ENCODE measurements at regions of chr19 and their contacts with region 1.

Region 1: DNA sequence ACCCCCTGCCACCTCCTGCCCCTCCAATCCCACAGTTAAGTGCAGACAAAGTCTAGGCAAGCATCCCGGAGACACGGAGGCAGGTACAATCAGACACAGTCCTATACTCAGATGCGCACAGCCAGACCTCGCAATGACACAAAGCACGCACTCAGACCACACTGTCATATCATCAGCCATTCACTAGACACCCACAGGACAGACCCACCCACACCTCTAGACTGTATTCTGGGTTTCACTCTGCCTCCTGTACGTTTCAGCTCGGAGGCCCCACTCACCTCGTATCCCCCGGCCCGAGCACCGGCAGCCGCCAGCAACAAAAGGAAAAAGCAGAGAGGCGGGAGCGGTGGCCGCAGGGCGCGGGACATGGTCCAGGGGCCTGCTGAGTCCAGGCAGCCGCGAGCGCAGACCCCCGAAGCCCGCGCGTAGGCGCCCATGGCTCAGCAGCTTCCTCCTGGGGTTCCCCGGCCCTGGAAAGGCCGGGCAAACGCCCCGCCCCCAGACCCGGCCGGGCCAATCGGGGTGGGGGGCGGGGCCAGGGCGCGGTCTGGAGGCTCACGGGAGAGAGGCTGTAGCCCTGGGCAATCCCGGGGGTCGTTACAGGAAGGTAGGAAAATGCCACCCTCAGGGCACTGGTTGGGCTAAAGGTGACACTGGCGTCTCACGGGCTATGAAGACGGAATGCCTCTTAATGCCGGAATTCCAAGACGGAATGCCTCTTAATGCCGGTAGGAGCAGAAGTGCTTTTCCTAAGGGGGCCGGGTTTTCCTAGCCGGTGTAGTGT is at the starts of genes MAN2B1 and WDR83:
- DNase-seq: peak; percentile 77 to 91
- ATAC-seq: peak; percentile 78 to 87 (median 82)
- H3K4me3 ChIP-seq: peak within 1 kb of the TSS; percentile 94
- H3K4me3 Mint-ChIP-seq: peak within 1 kb of the TSS; percentile 96
- H3K27ac ChIP-seq: peak within 1 kb of the TSS; percentile 90
- H3K27ac Mint-ChIP-seq: peak within 1 kb of the TSS; percentile 98
- H3K4me1 ChIP-seq: peaks cover 59% of the 10 kb centered on the region
- H3K4me1 Mint-ChIP-seq: peaks cover 41 to 52% of the 10 kb centered on the region in 2 donors
- H3K27me3 ChIP-seq: no peaks in the 10 kb centered on the region
- H3K27me3 Mint-ChIP-seq: no peaks in the 10 kb centered on the region
- CTCF ChIP-seq: no peak
- total RNA-seq, gene MAN2B1: 107 to 118 (median 112) TPM
- total RNA-seq, gene WDR83: 17.0 to 25.8 (median 25.1) TPM

Region 2: DNA sequence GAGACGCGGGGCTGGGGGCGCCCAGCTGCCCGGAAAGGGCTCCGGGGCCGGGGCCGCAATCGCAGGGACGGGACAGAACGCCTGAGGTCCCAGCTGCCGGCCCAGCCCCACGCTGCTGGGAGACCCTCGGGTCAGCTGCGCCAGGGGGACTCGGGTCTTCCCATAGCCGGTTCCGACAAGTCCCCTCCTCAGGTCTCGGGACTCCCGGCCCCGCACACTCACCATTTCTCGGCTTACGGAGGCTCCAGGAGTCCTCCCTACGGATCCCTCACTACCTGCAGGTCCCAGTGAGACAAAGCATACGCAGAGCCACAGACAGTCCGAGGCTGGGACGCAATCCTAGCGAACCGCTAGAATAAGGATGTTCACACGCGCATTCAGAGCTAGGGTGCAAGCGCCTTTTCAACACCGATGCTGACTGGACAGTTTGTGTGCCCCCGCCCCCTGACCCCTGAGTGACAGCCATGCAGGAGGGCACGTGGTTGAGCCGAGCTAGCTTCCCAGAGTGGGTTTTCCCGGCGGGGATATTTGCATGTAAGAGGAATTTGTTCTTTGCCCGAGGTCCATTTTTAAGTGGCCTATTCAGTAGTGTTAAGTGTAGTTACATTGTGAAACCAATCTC is 69.4 kb before region 1 on chr19:
- intact Hi-C with region 1: no loop called
- DNase-seq: no peak
- ATAC-seq: no peak
- H3K4me3 ChIP-seq: no peak overlapping the region
- H3K4me3 Mint-ChIP-seq: no peak overlapping the region
- H3K27ac ChIP-seq: no peak overlapping the region
- H3K27ac Mint-ChIP-seq: no peak overlapping the region
- H3K4me1 ChIP-seq: no peaks in the 10 kb centered on the region
- H3K4me1 Mint-ChIP-seq: peaks cover 0 to 10% of the 10 kb centered on the region in 2 donors
- H3K27me3 ChIP-seq: no peaks in the 10 kb centered on the region
- H3K27me3 Mint-ChIP-seq: no peaks in the 10 kb centered on the region
- CTCF ChIP-seq: no peak

Region 3: GRCh38 chr19:12610540-12611360 is 55.7 kb before region 1 on chr19 and contains the starts of genes ZNF490 and ZNF791:
- intact Hi-C with region 1: loop called (anchors 1 kb)
- DNase-seq: peak; percentile 95 to 97
- ATAC-seq: peak; percentile 93 to 98 (median 95)
- H3K4me3 ChIP-seq: peak within 1 kb of the TSS; percentile 90
- H3K4me3 Mint-ChIP-seq: peak within 1 kb of the TSS; percentile 99
- H3K27ac ChIP-seq: peak within 1 kb of the TSS; percentile 95
- H3K27ac Mint-ChIP-seq: peak within 1 kb of the TSS; percentile 98 to 99
- H3K4me1 ChIP-seq: peaks cover 49% of the 10 kb centered on the region
- H3K4me1 Mint-ChIP-seq: peaks cover 24 to 28% of the 10 kb centered on the region in 2 donors
- H3K27me3 ChIP-seq: no peaks in the 10 kb centered on the region
- H3K27me3 Mint-ChIP-seq: no peaks in the 10 kb centered on the region
- CTCF ChIP-seq: no peak
- total RNA-seq, gene ZNF490: 12.0 to 21.4 (median 20.9) TPM
- total RNA-seq, gene ZNF791: 52.6 to 62.0 (median 56.5) TPM

Region 4: DNA sequence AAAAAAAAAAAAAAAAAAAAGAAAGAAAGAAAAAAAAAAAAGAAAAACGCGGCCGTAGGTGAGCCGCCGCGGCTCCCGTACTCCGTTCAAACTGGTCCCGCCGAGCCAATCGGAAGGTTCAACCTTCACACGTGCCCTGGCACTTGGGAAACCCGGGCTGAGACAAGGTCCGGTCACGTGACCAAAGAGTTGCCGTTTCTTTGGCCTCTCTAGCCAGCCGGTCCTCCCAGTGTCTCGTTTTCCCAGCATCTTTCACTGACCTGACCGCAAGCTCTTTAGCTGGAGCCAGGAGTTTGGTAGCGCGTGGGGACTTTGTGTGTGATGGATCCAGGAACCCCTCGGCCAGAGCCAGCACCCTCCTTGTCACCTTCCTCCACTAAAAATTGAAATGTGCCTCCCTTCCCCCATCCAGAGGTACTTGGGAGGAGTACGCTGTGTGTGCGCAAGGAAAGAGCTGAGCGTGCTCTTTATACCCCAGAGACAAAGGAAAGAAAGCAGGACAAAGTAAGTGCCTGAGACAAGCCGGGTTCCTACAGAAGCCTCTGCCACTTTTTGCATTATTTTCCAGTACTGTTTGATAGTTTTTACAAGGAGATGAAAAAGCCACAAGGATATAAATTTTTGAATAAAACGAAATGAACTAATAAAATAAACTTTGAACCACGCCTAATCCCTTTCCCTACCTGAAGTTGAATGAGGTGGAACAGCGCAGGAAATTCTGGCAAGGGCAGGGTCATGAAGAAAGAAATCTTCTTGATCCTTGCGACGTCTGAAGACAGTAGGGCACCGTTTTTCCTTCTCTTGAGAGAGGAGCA is 56.3 kb after region 1 on chr19:
- intact Hi-C with region 1: loop called (anchors 5 kb)
- DNase-seq: peak; percentile 87 to 99
- ATAC-seq: peak; percentile 87 to 97 (median 95)
- H3K4me3 ChIP-seq: peak overlapping the region; percentile 60
- H3K4me3 Mint-ChIP-seq: peak overlapping the region; percentile 93
- H3K27ac ChIP-seq: peak overlapping the region; percentile 44
- H3K27ac Mint-ChIP-seq: peak overlapping the region; percentile 91 to 96
- H3K4me1 ChIP-seq: peaks cover 36% of the 10 kb centered on the region
- H3K4me1 Mint-ChIP-seq: peaks cover 26 to 42% of the 10 kb centered on the region in 2 donors
- H3K27me3 ChIP-seq: no peaks in the 10 kb centered on the region
- H3K27me3 Mint-ChIP-seq: no peaks in the 10 kb centered on the region
- CTCF ChIP-seq: no peak